ENCODE measurements at regions of chr7 and their contacts with region 1.

Region 1: GRCh38 chr7:141014524-141015395 is at the start of gene MRPS33:
- DNase-seq: peak; percentile 94 to 95
- H3K4me3 ChIP-seq: peak within 1 kb of the TSS; percentile 56 to 90 (median 76)
- H3K27ac ChIP-seq: peak within 1 kb of the TSS; percentile 90
- H3K4me1 ChIP-seq: no peaks in the 10 kb centered on the region; a peak in 1 of 7 replicates
- H3K27me3 ChIP-seq: no peaks in the 10 kb centered on the region
- CTCF ChIP-seq: peak; percentile 76 to 83 (median 82)
- EP300 ChIP-seq: peak in 1 of 2 experiments; percentile 47; a peak in 1 of 3 replicates
- POLR2A ChIP-seq: peak; percentile 99
- RAD21 ChIP-seq: peak; percentile 30 to 36
- total RNA-seq, gene MRPS33: 62.6 and 66.4 TPM in 2 replicates

Region 2: DNA sequence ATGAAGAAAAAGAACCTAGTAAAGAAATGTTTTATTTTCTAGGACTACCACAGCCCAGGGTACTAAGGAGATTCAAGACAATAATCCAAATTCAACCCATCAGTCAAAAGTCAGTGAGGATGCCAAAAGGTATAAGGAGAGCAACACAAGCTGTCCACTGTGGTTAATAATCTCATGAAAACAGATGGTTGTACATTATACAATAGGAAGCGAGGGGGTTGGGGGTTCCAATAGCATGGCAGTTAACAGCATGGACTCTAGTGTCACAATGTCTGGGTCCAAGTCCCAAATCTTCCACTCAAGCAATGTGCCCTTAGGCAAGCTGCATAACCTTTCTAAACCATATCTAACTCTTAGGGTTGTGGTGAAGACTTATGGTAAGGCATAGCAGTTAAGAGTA is 125.1 kb before region 1 on chr7:
- CTCF ChIA-PET with region 1: no interaction called
- POLR2A ChIA-PET with region 1: no interaction called
- DNase-seq: no peak
- H3K4me3 ChIP-seq: no peak overlapping the region
- H3K27ac ChIP-seq: no peak overlapping the region
- H3K4me1 ChIP-seq: peaks cover 0 to 3% (median 0%) of the 10 kb centered on the region in 4 experiments; a peak in 2 of 7 replicates
- H3K27me3 ChIP-seq: no peaks in the 10 kb centered on the region
- CTCF ChIP-seq: no peak
- EP300 ChIP-seq: no peak
- POLR2A ChIP-seq: no peak
- RAD21 ChIP-seq: no peak

Region 3: GRCh38 chr7:141003172-141004065 is 11.3 kb before region 1 on chr7:
- CTCF ChIA-PET with region 1: interaction called, 11 read pairs
- POLR2A ChIA-PET with region 1: interaction called, 4 read pairs
- DNase-seq: no peak
- H3K4me3 ChIP-seq: no peak overlapping the region
- H3K27ac ChIP-seq: no peak overlapping the region
- H3K4me1 ChIP-seq: no peaks in the 10 kb centered on the region
- H3K27me3 ChIP-seq: no peaks in the 10 kb centered on the region
- CTCF ChIP-seq: no peak
- EP300 ChIP-seq: no peak
- POLR2A ChIP-seq: no peak
- RAD21 ChIP-seq: no peak

Region 4: GRCh38 chr7:141045842-141046630 is 31.3 kb after region 1 on chr7:
- CTCF ChIA-PET with region 1: no interaction called
- POLR2A ChIA-PET with region 1: no interaction called
- DNase-seq: no peak
- H3K4me3 ChIP-seq: no peak overlapping the region
- H3K27ac ChIP-seq: no peak overlapping the region
- H3K4me1 ChIP-seq: no peaks in the 10 kb centered on the region
- H3K27me3 ChIP-seq: no peaks in the 10 kb centered on the region
- CTCF ChIP-seq: no peak
- EP300 ChIP-seq: no peak
- POLR2A ChIP-seq: no peak
- RAD21 ChIP-seq: no peak

Region 5: DNA sequence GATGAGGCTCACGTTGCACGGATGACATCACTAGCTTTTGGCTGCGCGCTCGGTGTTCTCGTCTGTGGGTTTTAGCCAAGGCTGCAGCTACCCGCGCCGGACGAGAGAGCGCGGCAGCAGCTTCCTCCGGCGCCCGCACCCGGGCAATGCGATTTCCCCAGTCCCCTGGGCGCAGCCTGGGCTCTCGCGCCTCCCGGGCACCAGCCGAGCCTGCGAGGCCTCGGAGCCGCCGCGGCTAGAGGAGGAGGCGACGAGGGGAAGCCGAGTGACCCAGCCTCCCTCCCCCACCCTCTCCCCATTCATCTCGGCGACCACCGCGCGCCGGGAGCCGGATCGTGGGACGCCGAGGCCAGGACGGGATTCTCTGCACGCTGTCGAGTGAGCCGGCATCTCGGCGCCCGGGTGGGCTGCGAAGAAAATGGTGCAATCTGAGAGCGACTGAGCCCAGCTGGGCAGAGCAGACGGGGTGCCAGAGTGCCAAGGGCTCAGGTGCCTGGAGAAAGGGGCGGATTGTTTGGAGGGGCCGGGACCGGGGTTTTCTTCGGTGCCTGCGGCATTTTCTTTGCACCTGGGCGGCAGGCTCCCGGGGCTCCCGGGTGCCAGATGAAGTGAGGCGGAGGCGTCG is 57.9 kb after region 1 on chr7:
- CTCF ChIA-PET with region 1: interaction called, 4 read pairs
- POLR2A ChIA-PET with region 1: interaction called, 19 read pairs
- DNase-seq: peak in 1 of 2 experiments; percentile 71
- H3K4me3 ChIP-seq: peak overlapping the region; percentile 62 to 86 (median 67)
- H3K27ac ChIP-seq: no peak overlapping the region
- H3K4me1 ChIP-seq: peaks cover 2 to 7% (median 4%) of the 10 kb centered on the region in 4 experiments; a peak in 5 of 7 replicates
- H3K27me3 ChIP-seq: peaks cover 0 to 19% (median 10%) of the 10 kb centered on the region in 4 experiments; a peak in 5 of 7 replicates
- CTCF ChIP-seq: no peak
- EP300 ChIP-seq: no peak
- POLR2A ChIP-seq: no peak
- RAD21 ChIP-seq: no peak

Measured in H1 (cell line).